HepG2 (cell line): ENCODE measurements at regions of chr1 and their contacts with region 1.

Region 1: GRCh38 chr1:165257969-165258459 is 98.5 kb downstream of the LMX1A start:
- DNase-seq: peak; percentile 60
- ATAC-seq: peak; percentile 22
- H3K4me3 ChIP-seq: no peak overlapping the region
- H3K27ac ChIP-seq: no peak overlapping the region
- H3K4me1 ChIP-seq: peaks cover 62% of the 10 kb centered on the region
- H3K27me3 ChIP-seq: no peaks in the 10 kb centered on the region
- CTCF ChIP-seq: peak; percentile 71
- EP300 ChIP-seq: no peak
- POLR2A ChIP-seq: no peak
- RAD21 ChIP-seq: no peak; the same call in 1 of the 2 replicates

Region 2: DNA sequence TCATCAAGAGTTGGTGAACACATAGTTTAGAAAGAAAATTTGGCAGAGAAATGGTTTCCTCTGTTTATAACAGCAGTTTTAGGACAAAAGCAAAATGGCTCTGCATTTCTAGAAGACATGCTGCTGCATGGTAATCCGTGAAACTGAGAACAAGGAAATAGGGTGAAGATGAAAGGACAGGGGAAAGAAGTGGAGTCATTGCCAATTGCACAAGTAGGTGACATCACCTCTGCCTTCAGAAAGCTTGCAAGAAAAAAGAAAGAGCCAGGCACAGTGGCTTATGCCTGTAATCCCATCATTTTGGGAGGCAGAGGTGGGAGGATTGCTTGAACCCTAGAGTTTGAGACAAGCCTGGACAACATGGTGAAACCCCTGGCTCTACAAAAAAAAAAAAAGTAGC is 119.0 kb before region 1 on chr1:
- CTCF ChIA-PET with region 1: no interaction called
- POLR2A ChIA-PET with region 1: interaction called, 7 read pairs
- in situ Hi-C with region 1: no loop called
- intact Hi-C with region 1: loop called (anchors 2 kb)
- DNase-seq: no peak
- ATAC-seq: no peak
- H3K4me3 ChIP-seq: no peak overlapping the region
- H3K27ac ChIP-seq: no peak overlapping the region
- H3K4me1 ChIP-seq: peaks cover 38% of the 10 kb centered on the region
- H3K27me3 ChIP-seq: no peaks in the 10 kb centered on the region
- CTCF ChIP-seq: no peak
- EP300 ChIP-seq: no peak
- POLR2A ChIP-seq: no peak
- RAD21 ChIP-seq: no peak

Region 3: DNA sequence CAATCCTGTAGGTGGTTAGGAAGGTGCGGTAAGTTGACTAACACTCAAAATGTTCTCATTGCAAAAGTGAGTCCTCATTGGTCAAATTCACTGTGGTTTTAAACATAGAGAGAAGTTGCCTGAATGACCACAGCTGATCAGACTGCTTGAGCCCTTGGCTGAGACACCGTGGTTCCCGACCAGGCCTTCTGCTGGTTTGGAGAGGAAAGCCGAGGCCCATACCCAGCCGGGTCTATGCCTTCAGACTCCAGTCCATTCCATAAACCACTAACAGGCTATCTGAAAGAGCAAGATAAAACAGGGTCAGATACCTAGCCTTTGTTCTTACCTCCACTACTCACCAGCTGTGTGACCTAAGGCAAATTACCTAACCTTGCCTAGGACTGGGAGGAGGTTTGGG is 35.4 kb before region 1 on chr1:
- CTCF ChIA-PET with region 1: no interaction called
- POLR2A ChIA-PET with region 1: interaction called, 6 read pairs
- in situ Hi-C with region 1: no loop called
- intact Hi-C with region 1: loop called (anchors 1 kb)
- DNase-seq: no peak
- ATAC-seq: no peak
- H3K4me3 ChIP-seq: no peak overlapping the region
- H3K27ac ChIP-seq: no peak overlapping the region
- H3K4me1 ChIP-seq: peaks cover 47% of the 10 kb centered on the region
- H3K27me3 ChIP-seq: peaks cover 0 to 1% of the 10 kb centered on the region in 2 experiments; a peak in 1 of 5 replicates
- CTCF ChIP-seq: no peak
- EP300 ChIP-seq: no peak
- POLR2A ChIP-seq: no peak
- RAD21 ChIP-seq: no peak

Region 4: GRCh38 chr1:165240492-165240891 is 17.5 kb before region 1 on chr1:
- CTCF ChIA-PET with region 1: no interaction called
- POLR2A ChIA-PET with region 1: interaction called, 15 read pairs
- in situ Hi-C with region 1: no loop called
- intact Hi-C with region 1: no loop called
- DNase-seq: no peak
- ATAC-seq: peak; percentile 66
- H3K4me3 ChIP-seq: no peak overlapping the region
- H3K27ac ChIP-seq: no peak overlapping the region
- H3K4me1 ChIP-seq: peaks cover 30% of the 10 kb centered on the region
- H3K27me3 ChIP-seq: peaks cover 2 to 11% of the 10 kb centered on the region in 2 experiments; a peak in 4 of 5 replicates
- CTCF ChIP-seq: no peak
- EP300 ChIP-seq: no peak
- POLR2A ChIP-seq: no peak
- RAD21 ChIP-seq: no peak

Region 5: DNA sequence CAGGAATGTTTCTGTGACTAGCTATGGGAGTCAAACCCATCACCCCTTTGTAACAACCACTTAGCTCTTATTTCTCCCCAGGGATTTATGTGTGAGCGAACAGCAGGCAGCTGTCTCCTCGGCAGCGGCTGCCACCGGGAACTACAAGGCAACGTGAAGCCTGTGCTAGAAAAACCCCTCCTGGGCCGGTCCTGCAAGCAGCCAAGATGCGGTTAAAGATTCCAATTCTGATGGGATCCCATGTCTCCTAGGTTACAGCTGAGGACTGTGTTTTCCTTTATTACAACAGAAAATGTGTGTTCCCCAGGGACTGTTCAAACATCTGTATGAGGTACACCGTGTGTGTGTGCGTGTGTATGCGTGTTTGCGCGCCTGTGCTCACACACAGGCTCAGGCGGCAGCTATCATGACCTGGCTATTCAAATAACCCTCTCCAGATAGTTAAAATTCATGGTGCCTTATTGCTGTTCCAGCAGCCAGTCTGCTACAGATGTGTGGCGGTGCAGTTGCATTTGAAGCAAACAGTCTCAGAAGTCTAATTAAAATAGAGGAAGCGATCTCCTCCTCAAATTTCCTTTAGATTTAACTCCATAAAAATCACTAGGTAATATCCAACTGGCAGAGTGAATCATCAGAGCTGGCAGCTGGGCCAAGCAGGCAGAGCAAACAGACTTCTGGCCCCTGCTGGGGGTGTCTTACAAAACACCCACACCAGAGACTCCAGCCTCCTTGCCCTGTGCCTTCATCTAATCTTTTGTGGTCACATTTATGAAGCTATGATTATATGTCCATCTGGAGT is 30.5 kb after region 1 on chr1:
- CTCF ChIA-PET with region 1: no interaction called
- POLR2A ChIA-PET with region 1: interaction called, 3 read pairs
- in situ Hi-C with region 1: no loop called
- intact Hi-C with region 1: loop called (anchors 5 kb)
- DNase-seq: no peak
- ATAC-seq: no peak
- H3K4me3 ChIP-seq: no peak overlapping the region
- H3K27ac ChIP-seq: no peak overlapping the region
- H3K4me1 ChIP-seq: 0 out of 2 replicates have a peak, but pooled peaks cover 9% of the 10 kb centered on the region
- H3K27me3 ChIP-seq: no peaks in the 10 kb centered on the region
- CTCF ChIP-seq: no peak
- EP300 ChIP-seq: no peak
- POLR2A ChIP-seq: no peak
- RAD21 ChIP-seq: no peak

Region 6: DNA sequence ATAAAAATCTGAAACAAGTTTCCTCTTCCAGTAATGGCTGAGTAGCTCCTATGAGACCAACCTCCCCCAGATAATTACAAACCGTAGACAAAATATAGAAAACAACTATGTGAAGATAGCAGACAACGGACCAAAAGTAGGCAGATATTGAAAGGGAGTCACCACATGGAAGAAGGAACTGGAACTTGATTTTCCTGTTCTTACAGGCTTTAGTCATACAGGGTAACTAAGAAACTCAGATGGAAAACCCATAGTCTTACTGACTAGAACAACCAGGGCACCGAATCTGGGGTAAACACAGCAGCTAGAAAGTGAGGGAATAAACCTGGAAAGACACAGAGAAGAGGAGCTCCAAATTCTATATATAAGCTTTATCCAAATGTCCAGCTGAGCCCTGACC is 72.5 kb after region 1 on chr1:
- CTCF ChIA-PET with region 1: no interaction called
- POLR2A ChIA-PET with region 1: no interaction called
- in situ Hi-C with region 1: no loop called
- intact Hi-C with region 1: no loop called
- DNase-seq: no peak
- ATAC-seq: no peak
- H3K4me3 ChIP-seq: no peak overlapping the region
- H3K27ac ChIP-seq: no peak overlapping the region
- H3K4me1 ChIP-seq: no peaks in the 10 kb centered on the region
- H3K27me3 ChIP-seq: no peaks in the 10 kb centered on the region
- CTCF ChIP-seq: no peak
- EP300 ChIP-seq: no peak
- POLR2A ChIP-seq: no peak
- RAD21 ChIP-seq: no peak

Region 7: GRCh38 chr1:165367375-165367993 is 109.5 kb after region 1 on chr1:
- CTCF ChIA-PET with region 1: interaction called, 3 read pairs
- POLR2A ChIA-PET with region 1: interaction called, 3 read pairs
- in situ Hi-C with region 1: no loop called
- intact Hi-C with region 1: loop called (anchors 1 kb)
- DNase-seq: peak; percentile 73
- ATAC-seq: peak; percentile 89
- H3K4me3 ChIP-seq: no peak overlapping the region
- H3K27ac ChIP-seq: no peak overlapping the region
- H3K4me1 ChIP-seq: peaks cover 10% of the 10 kb centered on the region
- H3K27me3 ChIP-seq: no peaks in the 10 kb centered on the region; a peak in 1 of 5 replicates
- CTCF ChIP-seq: peak; percentile 83
- EP300 ChIP-seq: no peak
- POLR2A ChIP-seq: no peak
- RAD21 ChIP-seq: no peak